Naive thymus-derived CD4-positive, alpha-beta T cell (primary cell): ENCODE measurements at regions of chr4 and their contacts with region 1.

Region 1: GRCh38 chr4:129093191-129093920 is at the start of gene SCLT1:
- DNase-seq: peak; percentile 89 to 97 (median 94)
- ATAC-seq: peak; percentile 96
- H3K4me3 ChIP-seq: peak within 1 kb of the TSS; percentile 83
- H3K4me3 Mint-ChIP-seq: peak within 1 kb of the TSS in 5 of 10 donors; percentile 33 to 65 (median 50)
- H3K27ac ChIP-seq: peak within 1 kb of the TSS; percentile 95
- H3K27ac Mint-ChIP-seq: peak within 1 kb of the TSS in 4 of 9 donors; percentile 33 to 76 (median 50)
- H3K4me1 ChIP-seq: peaks cover 26 to 30% of the 10 kb centered on the region in 2 donors
- H3K4me1 Mint-ChIP-seq: peaks cover 16 to 57% (median 43%) of the 10 kb centered on the region in 7 donors
- H3K27me3 ChIP-seq: no peaks in the 10 kb centered on the region
- H3K27me3 Mint-ChIP-seq: no peaks in the 10 kb centered on the region
- total RNA-seq, gene SCLT1: 21.4 to 36.4 (median 26.9) TPM

Region 2: GRCh38 chr4:127965062-127965802 is 1128.1 kb before region 1 on chr4 and contains the starts of genes ABHD18 and MFSD8:
- CTCF ChIA-PET with region 1: no interaction called
- POLR2A ChIA-PET with region 1: interaction called, 5 read pairs
- intact Hi-C with region 1: loop called (anchors 1 to 2 kb)
- DNase-seq: peak; percentile 93 to 98 (median 98)
- ATAC-seq: peak; percentile 96
- H3K4me3 ChIP-seq: peak within 1 kb of the TSS; percentile 100
- H3K4me3 Mint-ChIP-seq: peak within 1 kb of the TSS; percentile 78 to 98 (median 94)
- H3K27ac ChIP-seq: peak within 1 kb of the TSS; percentile 92
- H3K27ac Mint-ChIP-seq: peak within 1 kb of the TSS; percentile 88 to 99 (median 95)
- H3K4me1 ChIP-seq: peaks cover 5 to 13% of the 10 kb centered on the region in 2 donors
- H3K4me1 Mint-ChIP-seq: peaks cover 14 to 66% (median 52%) of the 10 kb centered on the region in 7 donors
- H3K27me3 ChIP-seq: no peaks in the 10 kb centered on the region
- H3K27me3 Mint-ChIP-seq: peaks cover 0 to 3% (median 0%) of the 10 kb centered on the region in 5 donors
- total RNA-seq, gene ABHD18: 22.4 to 26.6 (median 25.1) TPM
- total RNA-seq, gene MFSD8: 20.3 to 54.5 (median 23.0) TPM

Region 3: GRCh38 chr4:128287871-128288688 is 805.3 kb before region 1 on chr4:
- CTCF ChIA-PET with region 1: interaction called, 3 read pairs
- POLR2A ChIA-PET with region 1: interaction called, 4 read pairs
- intact Hi-C with region 1: loop called (anchors 1 kb)
- DNase-seq: peak; percentile 97 to 100 (median 98)
- ATAC-seq: peak; percentile 90
- H3K4me3 ChIP-seq: peak overlapping the region; percentile 88
- H3K4me3 Mint-ChIP-seq: peak overlapping the region; percentile 81 to 98 (median 87)
- H3K27ac ChIP-seq: peak overlapping the region; percentile 98
- H3K27ac Mint-ChIP-seq: peak overlapping the region; percentile 82 to 99 (median 96)
- H3K4me1 ChIP-seq: peaks cover 12 to 25% of the 10 kb centered on the region in 2 donors
- H3K4me1 Mint-ChIP-seq: peaks cover 26 to 50% (median 46%) of the 10 kb centered on the region in 7 donors
- H3K27me3 ChIP-seq: no peaks in the 10 kb centered on the region
- H3K27me3 Mint-ChIP-seq: no peaks in the 10 kb centered on the region

Region 4: DNA sequence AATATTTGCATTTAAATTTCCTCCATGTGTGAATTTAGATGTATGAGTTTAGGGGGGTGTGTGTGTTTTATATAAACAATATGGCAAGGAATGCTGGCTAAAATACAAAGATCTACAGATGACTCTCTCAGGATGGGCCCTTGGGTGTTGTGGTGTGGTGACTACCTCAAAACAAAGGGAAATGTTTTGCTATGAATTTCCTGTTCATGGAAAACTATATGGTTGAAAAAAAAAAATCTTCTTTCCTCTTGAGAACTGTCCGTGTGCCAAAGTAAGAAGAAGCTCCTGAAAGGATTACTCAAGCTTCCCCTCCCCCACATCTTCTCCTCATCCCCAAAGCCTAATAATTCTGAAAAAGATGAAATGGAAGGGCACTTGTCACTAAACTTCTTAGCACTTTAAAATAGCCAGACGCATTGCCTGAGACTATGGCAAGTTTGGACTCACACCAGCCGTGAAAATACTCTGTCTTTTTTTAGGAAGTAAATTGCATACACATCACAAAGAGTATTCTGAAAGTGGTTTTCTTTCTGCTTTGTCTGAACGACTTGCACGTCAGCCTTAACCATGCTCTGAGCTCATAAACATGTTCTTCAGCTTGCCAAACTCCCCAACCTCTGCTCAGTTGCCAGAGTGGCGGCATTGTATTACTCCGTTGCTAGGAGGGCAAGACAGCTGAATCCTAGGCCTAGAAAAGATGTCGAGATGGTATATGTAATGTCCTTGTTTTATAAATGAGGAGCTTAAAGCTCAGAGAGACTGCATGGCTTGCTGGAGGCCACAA is 534.3 kb before region 1 on chr4:
- CTCF ChIA-PET with region 1: no interaction called
- POLR2A ChIA-PET with region 1: no interaction called
- intact Hi-C with region 1: loop called (anchors 10 kb)
- DNase-seq: no peak
- ATAC-seq: no peak
- H3K4me3 ChIP-seq: no peak overlapping the region
- H3K4me3 Mint-ChIP-seq: no peak overlapping the region
- H3K27ac ChIP-seq: no peak overlapping the region
- H3K27ac Mint-ChIP-seq: no peak overlapping the region
- H3K4me1 ChIP-seq: peaks cover 0 to 1% of the 10 kb centered on the region in 2 donors
- H3K4me1 Mint-ChIP-seq: peaks cover 1 to 9% (median 1%) of the 10 kb centered on the region in 7 donors
- H3K27me3 ChIP-seq: no peaks in the 10 kb centered on the region
- H3K27me3 Mint-ChIP-seq: peaks cover 0 to 9% (median 1%) of the 10 kb centered on the region in 5 donors

Region 5: GRCh38 chr4:128869776-128870509 is 223.4 kb before region 1 on chr4:
- CTCF ChIA-PET with region 1: no interaction called
- POLR2A ChIA-PET with region 1: no interaction called
- intact Hi-C with region 1: no loop called
- DNase-seq: no peak
- ATAC-seq: no peak
- H3K4me3 ChIP-seq: no peak overlapping the region
- H3K4me3 Mint-ChIP-seq: no peak overlapping the region
- H3K27ac ChIP-seq: no peak overlapping the region
- H3K27ac Mint-ChIP-seq: peak overlapping the region; percentile 15 to 87 (median 42)
- H3K4me1 ChIP-seq: no peaks in the 10 kb centered on the region
- H3K4me1 Mint-ChIP-seq: peaks cover 0 to 18% (median 7%) of the 10 kb centered on the region in 7 donors
- H3K27me3 ChIP-seq: no peaks in the 10 kb centered on the region
- H3K27me3 Mint-ChIP-seq: no peaks in the 10 kb centered on the region

Region 6: DNA sequence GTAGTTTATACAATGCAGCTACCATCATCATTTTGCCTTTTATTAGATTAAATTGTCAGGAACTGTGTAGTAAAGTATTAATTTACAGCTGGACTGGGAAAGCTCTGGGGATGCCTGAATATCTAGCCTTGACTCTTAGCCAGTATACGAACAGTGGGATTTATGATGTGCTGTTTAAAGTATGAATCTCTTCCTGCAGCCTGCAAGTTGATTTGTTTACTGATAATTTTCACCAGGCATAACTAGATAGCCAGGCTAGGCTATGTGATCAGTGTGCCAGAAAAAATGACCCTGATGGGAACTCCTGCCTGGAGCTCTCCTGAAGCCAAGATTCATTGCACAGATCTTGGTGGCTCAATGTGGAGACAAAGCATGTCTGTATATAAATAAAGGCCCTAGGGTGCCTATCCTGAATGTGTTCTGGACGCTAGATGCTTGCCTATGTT is 119.2 kb before region 1 on chr4:
- CTCF ChIA-PET with region 1: no interaction called
- POLR2A ChIA-PET with region 1: no interaction called
- intact Hi-C with region 1: loop called in 1 of 2 experiments (anchors 5 kb)
- DNase-seq: no peak
- ATAC-seq: no peak
- H3K4me3 ChIP-seq: no peak overlapping the region
- H3K4me3 Mint-ChIP-seq: no peak overlapping the region
- H3K27ac ChIP-seq: no peak overlapping the region
- H3K27ac Mint-ChIP-seq: peak overlapping the region in 2 of 9 donors; percentile 14 to 60
- H3K4me1 ChIP-seq: no peaks in the 10 kb centered on the region
- H3K4me1 Mint-ChIP-seq: no peaks in the 10 kb centered on the region
- H3K27me3 ChIP-seq: no peaks in the 10 kb centered on the region
- H3K27me3 Mint-ChIP-seq: no peaks in the 10 kb centered on the region